ENCODE measurements at regions of chr6 and their contacts with region 1.

Region 1: GRCh38 chr6:593139-593906 is 63.6 kb downstream of the HUS1B start:
- DNase-seq: peak in 3 of 6 donors; percentile 11 to 59 (median 36)
- ATAC-seq: peak; percentile 63 to 88 (median 83)
- H3K4me3 ChIP-seq: no peak overlapping the region
- H3K27ac ChIP-seq: no peak overlapping the region
- H3K4me1 ChIP-seq: no peaks in the 10 kb centered on the region
- H3K27me3 ChIP-seq: no peaks in the 10 kb centered on the region
- CTCF ChIP-seq: peak; percentile 39 to 65 (median 58)

Region 2: DNA sequence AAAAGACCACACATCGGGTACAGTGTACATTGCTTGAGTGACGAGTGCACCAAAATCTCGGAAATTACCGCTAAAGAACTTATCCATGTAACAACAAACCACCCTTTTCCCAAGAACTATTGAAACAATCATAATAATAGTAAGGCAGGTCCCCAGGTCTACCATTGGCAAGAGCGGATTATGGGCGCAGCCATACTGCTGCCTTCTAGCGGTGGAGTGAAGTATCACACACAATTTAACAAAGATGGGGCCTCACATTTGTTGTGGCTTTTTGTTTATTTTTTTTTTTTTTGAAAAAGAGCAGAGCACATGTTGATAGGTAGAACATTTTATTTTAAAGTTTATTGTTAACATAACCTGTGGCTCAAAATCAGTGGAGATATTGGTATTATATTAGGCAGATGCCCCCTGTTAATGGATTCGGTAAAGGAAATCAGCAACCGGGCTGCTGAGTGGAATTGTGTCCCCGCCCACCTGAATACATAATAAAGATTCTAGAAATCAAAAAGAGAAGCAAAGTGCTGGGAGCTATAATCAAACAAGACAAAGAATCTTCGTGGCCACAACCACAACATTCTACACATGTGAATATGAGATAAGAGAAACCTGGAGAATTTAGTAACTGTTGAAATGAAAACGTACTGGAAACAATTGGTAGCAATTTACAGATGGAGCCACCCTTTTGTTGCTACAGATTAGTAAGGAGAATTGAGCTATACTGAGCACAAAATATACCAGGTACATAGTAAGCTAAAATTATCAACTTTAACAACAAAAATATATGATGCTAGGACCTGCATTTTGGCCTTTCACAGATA is 193.8 kb after region 1 on chr6:
- intact Hi-C with region 1: loop called in 1 of 3 experiments (anchors 10 kb)
- DNase-seq: peak in 1 of 6 donors; percentile 17
- ATAC-seq: peak in 3 of 4 donors; percentile 53 to 67 (median 59)
- H3K4me3 ChIP-seq: no peak overlapping the region
- H3K27ac ChIP-seq: no peak overlapping the region
- H3K4me1 ChIP-seq: no peaks in the 10 kb centered on the region
- H3K27me3 ChIP-seq: peaks cover 0 to 4% (median 0%) of the 10 kb centered on the region in 4 donors
- CTCF ChIP-seq: peak; percentile 23 to 56 (median 32)

Region 3: DNA sequence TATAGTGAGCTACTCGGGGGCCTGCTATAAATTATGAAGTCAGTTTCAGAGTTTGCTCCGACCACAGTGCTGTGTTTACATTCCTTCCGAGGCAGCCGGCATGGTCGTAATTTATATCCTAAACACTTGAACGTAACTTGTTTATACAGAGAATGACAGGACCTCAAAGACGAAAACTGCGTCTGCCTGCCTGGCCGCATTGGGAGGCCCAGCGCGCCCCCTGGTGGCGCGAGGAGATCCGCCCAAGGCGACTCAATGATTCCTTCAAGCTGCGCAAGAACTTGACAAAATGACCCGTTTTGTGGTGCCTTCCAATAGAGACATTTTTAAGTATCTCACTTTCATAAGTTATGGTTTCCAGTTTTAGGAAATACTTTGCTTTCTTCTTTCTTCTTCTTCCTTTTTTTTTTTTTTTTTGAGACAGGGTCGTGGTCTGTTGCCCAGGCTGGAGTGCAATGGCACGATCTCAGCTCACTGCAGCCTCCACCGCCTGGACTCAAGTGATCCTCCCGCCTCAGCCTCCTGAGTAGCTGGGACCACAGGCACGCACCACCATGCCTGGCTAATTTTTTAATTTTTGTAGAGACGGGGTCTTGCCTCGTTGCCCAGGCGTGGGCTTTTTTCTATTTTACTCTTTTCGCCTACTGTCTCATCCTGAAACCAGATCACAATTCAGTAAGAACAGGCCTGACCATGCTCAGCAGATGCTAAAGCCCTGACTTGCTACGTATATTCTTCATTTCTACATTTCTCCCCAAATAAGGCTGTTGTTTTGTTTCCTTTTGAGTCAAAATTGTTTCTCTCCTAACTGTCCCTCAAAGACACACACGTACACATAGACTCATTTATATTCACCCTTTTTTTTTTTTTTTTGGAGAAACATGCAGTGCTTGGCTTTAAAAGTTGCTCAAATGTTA is 803.9 kb after region 1 on chr6:
- intact Hi-C with region 1: loop called in 1 of 3 experiments (anchors 10 kb)
- DNase-seq: peak in 4 of 6 donors; percentile 28 to 88 (median 66)
- ATAC-seq: peak; percentile 56 to 83 (median 79)
- H3K4me3 ChIP-seq: no peak overlapping the region
- H3K27ac ChIP-seq: no peak overlapping the region
- H3K4me1 ChIP-seq: no peaks in the 10 kb centered on the region
- H3K27me3 ChIP-seq: peaks cover 0 to 32% (median 12%) of the 10 kb centered on the region in 4 donors
- CTCF ChIP-seq: peak; percentile 84 to 96 (median 92)